PC-9 (cell line): ENCODE measurements at regions of chr9 and their contacts with region 1.

Region 1: DNA sequence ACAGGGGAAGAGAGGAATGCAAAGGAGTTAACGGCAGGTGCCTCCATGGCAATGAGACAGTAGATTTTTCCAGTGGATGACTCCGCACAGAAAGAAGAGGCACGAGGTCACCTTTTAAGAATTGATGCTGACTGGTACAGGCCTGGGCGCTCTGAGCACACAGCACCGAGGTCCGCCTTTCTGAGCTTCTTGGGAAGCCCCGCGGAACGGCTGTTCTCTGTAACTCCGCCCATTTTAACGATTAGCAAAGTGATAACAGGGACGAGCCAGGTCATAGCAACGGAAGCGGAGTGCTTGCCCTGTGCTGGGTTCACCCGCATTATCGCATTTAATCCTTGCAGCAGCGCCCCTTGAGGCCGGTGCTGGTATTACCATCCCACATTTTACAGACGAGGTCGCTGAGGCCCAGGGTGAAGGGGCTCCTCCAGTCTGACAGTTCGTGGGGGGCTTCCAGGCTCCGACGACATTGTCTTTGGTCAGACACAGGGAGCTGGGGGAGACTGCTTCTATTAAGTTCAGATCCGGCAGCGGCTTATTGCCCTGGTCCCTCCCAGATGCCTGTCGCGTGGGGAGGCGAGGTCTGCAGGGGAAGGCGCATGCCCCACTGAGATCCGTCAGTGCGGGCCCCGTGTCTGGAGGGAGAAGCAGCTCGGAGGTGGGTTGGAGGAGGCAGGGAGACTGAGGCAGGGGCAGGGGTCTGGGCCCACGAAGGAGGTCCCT is 22.4 kb upstream of the HMCN2 start:
- DNase-seq: peak in 1 of 2 experiments; percentile 70
- H3K4me3 ChIP-seq: no peak overlapping the region
- H3K27ac ChIP-seq: no peak overlapping the region
- H3K4me1 ChIP-seq: no peaks in the 10 kb centered on the region
- H3K27me3 ChIP-seq: no peaks in the 10 kb centered on the region
- CTCF ChIP-seq: peak; percentile 98

Region 2: GRCh38 chr9:130110166-130110565 is 133.0 kb before region 1 on chr9:
- CTCF ChIA-PET with region 1: no interaction called
- POLR2A ChIA-PET with region 1: no interaction called
- intact Hi-C with region 1: no loop called
- DNase-seq: no peak
- H3K4me3 ChIP-seq: no peak overlapping the region
- H3K27ac ChIP-seq: no peak overlapping the region
- H3K4me1 ChIP-seq: no peaks in the 10 kb centered on the region
- H3K27me3 ChIP-seq: no peaks in the 10 kb centered on the region
- CTCF ChIP-seq: no peak

Region 3: GRCh38 chr9:130230631-130231030 is 12.5 kb before region 1 on chr9:
- CTCF ChIA-PET with region 1: interaction called, 10 read pairs
- POLR2A ChIA-PET with region 1: no interaction called
- intact Hi-C with region 1: no loop called
- DNase-seq: no peak
- H3K4me3 ChIP-seq: no peak overlapping the region
- H3K27ac ChIP-seq: no peak overlapping the region
- H3K4me1 ChIP-seq: no peaks in the 10 kb centered on the region
- H3K27me3 ChIP-seq: no peaks in the 10 kb centered on the region
- CTCF ChIP-seq: no peak

Region 4: DNA sequence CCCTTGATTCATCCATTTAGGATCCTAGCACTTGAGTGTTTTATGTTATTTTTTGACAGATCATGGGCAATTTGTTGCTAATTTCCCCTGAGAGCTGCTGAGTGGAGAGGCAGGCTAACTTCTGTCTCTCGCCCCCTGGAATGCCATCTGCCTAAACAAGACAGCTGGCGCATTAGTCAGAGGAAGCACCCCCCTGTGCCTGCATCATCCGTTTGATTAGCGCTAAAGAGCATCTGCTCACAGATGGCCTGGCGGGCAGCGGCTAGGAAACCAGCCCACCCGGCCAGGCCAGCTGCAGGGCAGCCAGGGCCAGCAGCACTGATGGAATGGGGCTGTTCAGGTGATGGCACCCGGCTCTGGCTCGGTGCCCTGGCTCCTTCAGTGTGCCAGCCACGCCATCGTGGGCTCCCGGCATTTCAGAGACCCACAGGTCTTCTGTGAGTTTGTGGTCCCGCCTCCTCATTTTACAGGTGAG is 178.7 kb after region 1 on chr9:
- CTCF ChIA-PET with region 1: no interaction called
- POLR2A ChIA-PET with region 1: no interaction called
- intact Hi-C with region 1: no loop called
- DNase-seq: no peak
- H3K4me3 ChIP-seq: no peak overlapping the region
- H3K27ac ChIP-seq: no peak overlapping the region
- H3K4me1 ChIP-seq: peaks cover 5% of the 10 kb centered on the region; the same call in 1 of the 2 replicates
- H3K27me3 ChIP-seq: no peaks in the 10 kb centered on the region
- CTCF ChIP-seq: no peak